Heart left ventricle (tissue), 16 donors: ENCODE measurements at regions of chr4 and their contacts with region 1.

Region 1: GRCh38 chr4:145660064-145660463 is 19.9 kb upstream of the C4orf51 start:
- DNase-seq: no peak
- ATAC-seq: no peak
- H3K4me3 ChIP-seq: no peak overlapping the region
- H3K27ac ChIP-seq: no peak overlapping the region
- H3K4me1 ChIP-seq: peaks cover 0 to 7% (median 0%) of the 10 kb centered on the region in 12 donors
- H3K27me3 ChIP-seq: no peaks in the 10 kb centered on the region
- CTCF ChIP-seq: no peak
- POLR2A ChIP-seq: no peak

Region 2: DNA sequence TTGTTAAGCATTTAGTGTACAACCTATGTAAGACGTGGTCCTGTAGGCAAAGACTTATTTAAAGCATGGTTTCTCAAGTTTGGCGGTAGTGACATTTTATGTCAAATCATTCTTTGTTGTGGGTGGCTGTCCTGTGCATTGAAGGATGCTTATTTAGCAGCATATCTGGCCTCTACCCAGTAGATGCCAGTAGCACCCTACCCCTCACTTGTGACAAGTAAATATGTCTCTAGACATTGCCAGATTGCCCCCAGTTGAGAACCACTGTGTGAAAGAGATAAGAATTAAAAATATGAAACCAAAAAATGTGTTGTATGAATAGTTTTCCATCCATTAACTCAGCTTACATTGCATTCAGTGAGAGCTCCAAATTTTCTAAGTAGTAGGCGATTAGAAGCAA is 15.4 kb before region 1 on chr4:
- intact Hi-C with region 1: loop called in 1 of 10 experiments (anchors 2 kb)
- DNase-seq: no peak
- ATAC-seq: no peak
- H3K4me3 ChIP-seq: no peak overlapping the region
- H3K27ac ChIP-seq: no peak overlapping the region
- H3K4me1 ChIP-seq: peaks cover 0 to 9% (median 4%) of the 10 kb centered on the region in 12 donors
- H3K27me3 ChIP-seq: no peaks in the 10 kb centered on the region
- CTCF ChIP-seq: peak in 3 of 12 donors; percentile 7 to 16 (median 14)
- POLR2A ChIP-seq: no peak